ENCODE measurements at regions of chr16 and their contacts with region 1.

Region 1: GRCh38 chr16:87387942-87388817 is 4.0 kb upstream of the MAP1LC3B start:
- DNase-seq: peak; percentile 98 to 99
- H3K4me3 ChIP-seq: peak overlapping the region; percentile 21
- H3K4me3 Mint-ChIP-seq: peak overlapping the region; percentile 75
- H3K27ac Mint-ChIP-seq: peak overlapping the region; percentile 87
- H3K4me1 ChIP-seq: peaks cover 21% of the 10 kb centered on the region; the same call in 1 of the 2 replicates
- H3K4me1 Mint-ChIP-seq: peaks cover 28% of the 10 kb centered on the region
- H3K27me3 ChIP-seq: no peaks in the 10 kb centered on the region
- H3K27me3 Mint-ChIP-seq: peaks cover 2% of the 10 kb centered on the region
- CTCF ChIP-seq: no peak

Region 2: DNA sequence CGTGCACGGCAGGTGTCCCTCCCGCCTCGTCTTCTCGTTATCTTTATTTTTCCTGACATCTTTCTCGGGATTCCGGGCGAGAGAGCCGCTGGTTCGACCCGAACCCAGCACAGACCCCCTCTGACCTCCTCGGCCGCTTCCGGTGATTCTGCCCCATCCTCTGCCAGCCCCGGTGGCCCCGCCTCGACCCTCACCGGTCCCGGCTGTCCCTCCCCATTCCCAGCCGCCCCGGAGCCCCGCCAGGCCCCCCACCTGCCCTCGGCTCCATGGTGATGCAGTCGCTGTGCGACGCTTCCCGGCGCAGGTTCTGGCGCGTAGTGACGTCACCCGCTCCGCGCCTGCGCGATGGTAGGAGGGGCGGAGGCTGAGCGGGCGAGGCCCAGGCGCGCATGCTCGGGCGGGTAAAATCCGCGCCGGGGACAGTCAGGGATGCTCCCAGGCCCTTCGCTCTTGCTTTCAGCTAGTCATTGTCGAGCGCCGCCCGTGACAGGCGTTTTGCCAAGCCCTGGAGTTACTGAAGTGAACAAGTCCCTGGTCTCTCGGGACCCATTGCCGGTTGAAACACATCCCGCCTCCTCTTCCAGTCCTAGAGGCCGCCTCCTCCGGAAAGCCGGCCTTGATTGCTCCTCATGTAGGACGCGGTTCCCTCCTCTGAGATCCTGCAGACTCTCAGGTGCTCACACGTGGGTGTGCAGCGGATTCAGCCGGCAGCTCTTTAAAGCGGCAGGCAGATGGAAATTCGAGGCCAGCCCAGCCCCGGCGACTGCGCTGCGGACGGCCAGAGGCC is 833.1 kb before region 1 on chr16 and contains the start of gene MTHFSD:
- CTCF ChIA-PET with region 1: no interaction called
- POLR2A ChIA-PET with region 1: no interaction called
- intact Hi-C with region 1: loop called (anchors 10 kb)
- DNase-seq: peak; percentile 95 to 98
- H3K4me3 ChIP-seq: peak within 1 kb of the TSS; percentile 88
- H3K4me3 Mint-ChIP-seq: peak within 1 kb of the TSS; percentile 98
- H3K27ac Mint-ChIP-seq: peak within 1 kb of the TSS; percentile 99
- H3K4me1 ChIP-seq: no peaks in the 10 kb centered on the region
- H3K4me1 Mint-ChIP-seq: peaks cover 8% of the 10 kb centered on the region
- H3K27me3 ChIP-seq: no peaks in the 10 kb centered on the region
- H3K27me3 Mint-ChIP-seq: no peaks in the 10 kb centered on the region
- CTCF ChIP-seq: no peak
- total RNA-seq, gene MTHFSD: 30.5 and 33.0 TPM in 2 replicates

Region 3: GRCh38 chr16:87288753-87289362 is 99.3 kb before region 1 on chr16:
- CTCF ChIA-PET with region 1: no interaction called
- POLR2A ChIA-PET with region 1: no interaction called
- intact Hi-C with region 1: no loop called
- DNase-seq: no peak
- H3K4me3 ChIP-seq: no peak overlapping the region
- H3K4me3 Mint-ChIP-seq: no peak overlapping the region
- H3K27ac Mint-ChIP-seq: no peak overlapping the region
- H3K4me1 ChIP-seq: no peaks in the 10 kb centered on the region
- H3K4me1 Mint-ChIP-seq: no peaks in the 10 kb centered on the region
- H3K27me3 ChIP-seq: no peaks in the 10 kb centered on the region
- H3K27me3 Mint-ChIP-seq: peaks cover 10% of the 10 kb centered on the region
- CTCF ChIP-seq: no peak

Region 4: DNA sequence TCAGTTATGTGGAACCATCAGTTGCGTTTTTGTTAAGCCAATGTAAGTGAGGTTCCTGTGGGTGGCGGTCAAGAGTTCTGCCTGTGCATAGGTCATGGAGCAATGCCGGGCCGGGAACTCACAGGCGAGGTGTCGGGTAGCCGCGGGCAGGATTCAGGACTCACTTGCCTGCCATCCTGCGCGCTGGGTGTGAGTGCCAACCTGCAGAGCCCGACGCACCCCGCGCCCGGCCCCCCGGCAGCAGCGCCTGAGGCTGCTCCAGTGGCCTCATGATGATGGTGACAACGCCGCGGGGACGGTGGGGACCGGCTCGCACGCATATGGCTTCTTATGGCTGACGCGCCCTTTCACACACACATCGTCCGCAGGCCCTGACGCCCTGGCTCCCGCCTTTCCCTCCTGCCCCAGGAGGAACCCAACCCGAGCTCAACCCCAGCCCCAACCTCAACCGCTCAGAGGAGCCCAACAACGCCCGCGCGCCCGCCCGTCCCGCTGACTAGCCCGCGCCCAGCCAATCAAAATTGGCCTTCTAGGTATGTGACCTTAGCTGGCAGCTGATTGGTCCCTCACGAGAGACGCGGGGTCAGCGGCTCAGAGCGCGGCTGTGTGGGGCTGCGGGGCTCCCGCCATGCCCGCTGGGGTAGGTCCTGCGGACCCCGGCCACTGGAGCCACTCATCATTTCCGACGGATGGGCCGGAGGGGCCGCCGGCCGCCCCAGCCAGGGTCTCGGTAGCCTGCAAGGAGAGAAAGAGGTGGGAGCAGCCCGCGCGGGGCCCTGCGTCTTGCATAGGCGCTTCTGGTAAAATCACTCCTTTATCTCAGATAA is 71.0 kb before region 1 on chr16 and contains the start of gene C16orf95:
- CTCF ChIA-PET with region 1: interaction called, 8 read pairs
- POLR2A ChIA-PET with region 1: interaction called, 38 read pairs
- intact Hi-C with region 1: loop called (anchors 2 kb)
- DNase-seq: peak; percentile 98 to 99
- H3K4me3 ChIP-seq: peak within 1 kb of the TSS; percentile 90
- H3K4me3 Mint-ChIP-seq: peak within 1 kb of the TSS; percentile 97
- H3K27ac Mint-ChIP-seq: peak within 1 kb of the TSS; percentile 99
- H3K4me1 ChIP-seq: peaks cover 6% of the 10 kb centered on the region
- H3K4me1 Mint-ChIP-seq: peaks cover 7% of the 10 kb centered on the region
- H3K27me3 ChIP-seq: no peaks in the 10 kb centered on the region
- H3K27me3 Mint-ChIP-seq: no peaks in the 10 kb centered on the region
- CTCF ChIP-seq: peak; percentile 53 to 69
- total RNA-seq, gene C16orf95: 4.4 and 6.9 TPM in 2 replicates

Region 5: GRCh38 chr16:87350681-87351319 is 37.4 kb before region 1 on chr16:
- CTCF ChIA-PET with region 1: interaction called, 7 read pairs
- POLR2A ChIA-PET with region 1: interaction called, 7 read pairs
- intact Hi-C with region 1: loop called (anchors 1 kb)
- DNase-seq: no peak
- H3K4me3 ChIP-seq: no peak overlapping the region
- H3K4me3 Mint-ChIP-seq: no peak overlapping the region
- H3K27ac Mint-ChIP-seq: no peak overlapping the region
- H3K4me1 ChIP-seq: peaks cover 11% of the 10 kb centered on the region
- H3K4me1 Mint-ChIP-seq: peaks cover 6% of the 10 kb centered on the region
- H3K27me3 ChIP-seq: no peaks in the 10 kb centered on the region
- H3K27me3 Mint-ChIP-seq: no peaks in the 10 kb centered on the region
- CTCF ChIP-seq: no peak

Region 6: DNA sequence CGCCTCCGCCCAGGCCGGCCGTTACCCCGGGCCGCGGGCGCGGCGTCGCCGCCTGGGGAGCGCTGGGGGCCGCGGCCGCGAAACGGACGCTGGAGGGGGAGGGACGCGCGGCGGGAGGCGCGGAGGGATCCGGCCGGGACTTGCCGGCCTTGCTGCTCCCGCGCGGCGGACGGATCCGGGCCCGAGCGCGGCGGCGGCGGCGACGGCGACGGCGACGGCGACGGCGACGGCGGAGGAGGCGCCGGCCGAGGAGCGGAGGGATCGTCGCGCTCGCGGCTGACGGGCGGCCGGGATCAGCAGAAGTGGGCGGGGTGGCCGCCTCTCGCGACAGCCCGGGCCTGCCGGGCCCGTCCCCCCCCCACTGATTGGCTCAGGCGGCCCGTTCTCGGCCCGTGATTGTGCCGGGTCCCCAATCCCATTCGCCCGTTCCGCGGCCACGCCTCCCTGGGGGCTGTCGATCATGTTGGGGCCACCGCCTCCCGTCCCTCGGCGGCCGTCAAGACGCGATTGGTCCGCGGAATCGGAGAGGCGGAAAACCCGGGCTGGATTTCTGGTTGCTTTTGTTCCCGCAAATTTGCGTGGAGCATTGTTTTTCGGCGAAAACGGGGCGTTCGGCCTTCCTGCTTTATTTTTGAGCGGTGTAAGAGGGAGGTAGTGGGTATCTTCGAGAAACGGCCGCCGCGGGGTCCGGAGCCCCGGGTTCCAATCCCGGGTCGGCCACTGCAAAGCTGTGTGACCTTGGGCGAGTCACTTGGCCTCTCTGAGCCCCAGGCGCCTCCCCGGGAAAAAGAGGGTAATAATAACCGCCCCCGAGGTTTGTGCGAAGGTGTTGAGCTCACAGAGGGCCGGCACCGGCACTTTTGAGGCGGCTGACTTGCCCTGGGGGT is 104.8 kb after region 1 on chr16 and contains the start of gene ZCCHC14:
- CTCF ChIA-PET with region 1: no interaction called
- POLR2A ChIA-PET with region 1: no interaction called
- intact Hi-C with region 1: loop called (anchors 5 kb)
- DNase-seq: peak; percentile 99 to 100
- H3K4me3 ChIP-seq: peak within 1 kb of the TSS; percentile 65
- H3K4me3 Mint-ChIP-seq: peak within 1 kb of the TSS; percentile 98
- H3K27ac Mint-ChIP-seq: peak within 1 kb of the TSS; percentile 92
- H3K4me1 ChIP-seq: 0 out of 2 replicates have a peak, but pooled peaks cover 4% of the 10 kb centered on the region
- H3K4me1 Mint-ChIP-seq: peaks cover 29% of the 10 kb centered on the region
- H3K27me3 ChIP-seq: no peaks in the 10 kb centered on the region
- H3K27me3 Mint-ChIP-seq: no peaks in the 10 kb centered on the region
- CTCF ChIP-seq: no peak
- total RNA-seq, gene ZCCHC14: 33.1 and 34.0 TPM in 2 replicates

Region 7: GRCh38 chr16:87681981-87682570 is 293.9 kb after region 1 on chr16:
- CTCF ChIA-PET with region 1: no interaction called
- POLR2A ChIA-PET with region 1: no interaction called
- intact Hi-C with region 1: no loop called
- DNase-seq: peak in 1 of 2 experiments; percentile 42
- H3K4me3 ChIP-seq: no peak overlapping the region
- H3K4me3 Mint-ChIP-seq: no peak overlapping the region
- H3K27ac Mint-ChIP-seq: no peak overlapping the region
- H3K4me1 ChIP-seq: no peaks in the 10 kb centered on the region
- H3K4me1 Mint-ChIP-seq: no peaks in the 10 kb centered on the region
- H3K27me3 ChIP-seq: no peaks in the 10 kb centered on the region
- H3K27me3 Mint-ChIP-seq: peaks cover 8% of the 10 kb centered on the region
- CTCF ChIP-seq: peak; percentile 36 to 54

Region 8: GRCh38 chr16:87877938-87878507 is 489.8 kb after region 1 on chr16:
- CTCF ChIA-PET with region 1: no interaction called
- POLR2A ChIA-PET with region 1: no interaction called
- intact Hi-C with region 1: loop called (anchors 5 kb)
- DNase-seq: peak in 1 of 2 experiments; percentile 18
- H3K4me3 ChIP-seq: no peak overlapping the region
- H3K4me3 Mint-ChIP-seq: no peak overlapping the region
- H3K27ac Mint-ChIP-seq: no peak overlapping the region
- H3K4me1 ChIP-seq: peaks cover 38% of the 10 kb centered on the region
- H3K4me1 Mint-ChIP-seq: peaks cover 19% of the 10 kb centered on the region
- H3K27me3 ChIP-seq: no peaks in the 10 kb centered on the region
- H3K27me3 Mint-ChIP-seq: no peaks in the 10 kb centered on the region
- CTCF ChIP-seq: no peak

Region 9: GRCh38 chr16:87950765-87951549 is 562.8 kb after region 1 on chr16 and contains the start of gene BANP:
- CTCF ChIA-PET with region 1: interaction called, 3 read pairs
- POLR2A ChIA-PET with region 1: interaction called, 5 read pairs
- intact Hi-C with region 1: loop called (anchors 5 kb)
- DNase-seq: peak; percentile 99 to 100
- H3K4me3 ChIP-seq: peak within 1 kb of the TSS; percentile 85
- H3K4me3 Mint-ChIP-seq: peak within 1 kb of the TSS; percentile 93
- H3K27ac Mint-ChIP-seq: peak within 1 kb of the TSS; percentile 100
- H3K4me1 ChIP-seq: peaks cover 41% of the 10 kb centered on the region
- H3K4me1 Mint-ChIP-seq: peaks cover 45% of the 10 kb centered on the region
- H3K27me3 ChIP-seq: no peaks in the 10 kb centered on the region
- H3K27me3 Mint-ChIP-seq: no peaks in the 10 kb centered on the region
- CTCF ChIP-seq: peak; percentile 77 to 94
- total RNA-seq, gene BANP: 44.4 and 50.6 TPM in 2 replicates